ENCODE measurements at regions of chr1 and their contacts with region 1.

Region 1: DNA sequence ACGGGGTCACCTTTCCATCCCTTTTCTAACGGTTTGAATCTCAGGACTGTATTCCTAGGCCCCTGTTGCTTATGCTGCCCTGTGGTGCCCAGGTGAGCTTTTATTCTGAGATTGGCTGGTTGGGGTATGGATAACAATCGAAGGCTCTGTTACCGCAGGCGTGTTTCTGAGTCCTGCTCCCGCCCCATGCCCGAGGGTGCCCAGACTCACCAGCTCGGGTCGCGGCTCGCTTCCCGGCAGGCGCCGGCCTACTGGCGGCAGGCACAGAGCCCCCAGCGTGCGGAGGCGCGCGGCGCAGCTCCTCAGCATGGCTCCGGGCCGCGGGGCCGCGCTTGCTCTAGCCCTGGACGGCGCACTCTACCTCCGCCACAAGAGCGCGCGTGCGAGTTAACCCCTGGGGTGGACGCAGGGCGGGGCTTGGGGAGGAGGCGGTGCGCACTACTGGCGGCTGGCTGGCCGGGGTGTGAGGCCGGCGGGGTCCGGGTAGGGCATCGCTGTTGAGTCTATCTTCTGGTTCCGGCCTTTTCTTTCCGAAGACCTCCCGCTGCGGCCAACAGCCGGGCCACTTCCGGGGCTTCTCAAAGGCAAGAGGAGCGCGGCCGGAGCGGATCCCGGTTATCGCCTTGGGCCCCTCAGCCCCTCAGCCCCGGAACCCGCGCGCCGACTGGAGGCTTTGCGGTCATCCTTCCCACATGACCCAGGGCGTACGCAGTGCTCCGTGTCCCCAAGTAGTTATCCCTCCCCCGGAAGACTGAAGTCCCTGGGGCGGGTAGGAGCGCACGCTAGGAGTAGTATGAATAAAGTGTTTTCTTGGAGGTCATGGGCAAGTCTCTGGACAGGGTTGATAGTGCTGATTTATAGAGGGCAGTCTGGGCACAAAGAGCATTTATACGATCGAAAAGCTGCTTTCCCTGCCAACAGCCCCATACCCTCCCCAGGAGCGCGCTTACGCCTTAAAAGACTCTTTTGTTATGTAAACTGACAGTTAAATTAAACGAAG is at the start of gene THEM4:
- DNase-seq: peak; percentile 73 to 92 (median 83)
- ATAC-seq: peak; percentile 76 to 83
- H3K4me3 Mint-ChIP-seq: peak within 1 kb of the TSS; percentile 83 to 91 (median 86)
- H3K27ac Mint-ChIP-seq: peak within 1 kb of the TSS; percentile 87 to 97 (median 93)
- H3K4me1 Mint-ChIP-seq: peaks cover 18 to 43% (median 42%) of the 10 kb centered on the region in 4 donors
- H3K27me3 Mint-ChIP-seq: no peaks in the 10 kb centered on the region
- polyA plus RNA-seq, gene THEM4: 82.2 to 116 (median 103) TPM

Region 2: DNA sequence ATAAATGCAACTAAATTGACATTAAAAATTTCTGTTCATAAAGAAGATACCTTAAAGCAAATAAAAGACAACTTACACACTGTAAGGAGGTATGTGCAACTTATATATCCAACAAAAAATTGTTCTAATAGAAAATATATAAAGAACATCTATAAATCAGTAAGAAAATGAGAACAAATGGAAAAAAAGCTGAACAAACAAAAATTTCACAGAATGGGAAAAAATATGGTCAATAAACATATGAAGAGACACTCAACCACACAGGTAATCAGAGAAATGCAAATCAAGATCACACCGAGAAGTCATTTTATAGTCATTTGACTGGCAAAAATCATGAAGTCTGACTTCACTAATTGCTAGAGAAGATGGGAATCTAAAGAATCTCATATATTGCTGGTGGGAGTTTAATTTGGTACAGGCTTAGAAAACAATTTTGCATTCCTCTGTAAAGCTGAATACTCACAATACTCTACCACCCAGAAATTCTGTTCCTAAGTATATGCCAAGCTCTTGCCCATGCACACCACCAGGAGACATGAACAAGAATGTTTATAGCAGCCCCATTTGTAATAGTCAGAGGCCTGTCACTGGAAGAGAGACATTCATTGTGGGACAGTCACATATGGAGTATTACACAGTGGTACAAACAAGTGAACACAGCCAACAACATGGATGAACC is 33.9 kb before region 1 on chr1:
- POLR2A ChIA-PET with region 1: no interaction called
- DNase-seq: no peak
- ATAC-seq: no peak
- H3K4me3 Mint-ChIP-seq: no peak overlapping the region
- H3K27ac Mint-ChIP-seq: peak overlapping the region in 5 of 10 donors; percentile 6 to 65 (median 27)
- H3K4me1 Mint-ChIP-seq: peaks cover 12 to 19% (median 13%) of the 10 kb centered on the region in 4 donors
- H3K27me3 Mint-ChIP-seq: no peaks in the 10 kb centered on the region

Region 3: GRCh38 chr1:151888972-151889570 is 20.4 kb before region 1 on chr1:
- POLR2A ChIA-PET with region 1: interaction called, 189 read pairs
- DNase-seq: peak in 3 of 10 donors; percentile 32 to 48 (median 41)
- ATAC-seq: peak; percentile 52 to 56
- H3K4me3 Mint-ChIP-seq: no peak overlapping the region
- H3K27ac Mint-ChIP-seq: peak overlapping the region in 6 of 10 donors; percentile 8 to 78 (median 44)
- H3K4me1 Mint-ChIP-seq: peaks cover 16 to 34% (median 31%) of the 10 kb centered on the region in 4 donors
- H3K27me3 Mint-ChIP-seq: no peaks in the 10 kb centered on the region

Region 4: DNA sequence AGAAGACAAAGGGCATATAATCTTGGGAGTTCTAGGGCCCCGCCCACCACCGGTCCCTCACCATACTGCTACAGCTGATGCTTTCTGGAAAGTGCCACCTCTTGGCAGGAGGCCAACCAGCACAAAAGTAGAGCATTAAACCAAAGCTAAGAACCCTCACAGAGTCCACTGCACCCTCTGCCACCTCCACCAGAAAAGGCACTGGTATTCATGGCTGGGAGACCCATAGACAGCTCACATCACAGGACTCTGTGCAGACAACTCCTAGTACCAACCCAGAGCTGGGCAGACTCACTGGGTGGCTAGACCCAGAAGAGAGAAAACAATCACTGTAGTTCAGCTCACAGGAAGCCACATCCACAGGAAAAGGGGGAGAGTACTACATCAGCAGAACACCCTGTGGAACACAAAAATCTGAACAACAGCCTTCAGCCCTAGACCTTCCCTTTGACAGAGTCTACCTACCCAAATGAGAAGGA is 10.9 kb before region 1 on chr1:
- POLR2A ChIA-PET with region 1: interaction called, 189 read pairs
- DNase-seq: peak; percentile 10 to 84 (median 64)
- ATAC-seq: peak; percentile 88 to 94
- H3K4me3 Mint-ChIP-seq: peak overlapping the region; percentile 71 to 87 (median 80)
- H3K27ac Mint-ChIP-seq: peak overlapping the region; percentile 93 to 98 (median 96)
- H3K4me1 Mint-ChIP-seq: peaks cover 44 to 73% (median 67%) of the 10 kb centered on the region in 4 donors
- H3K27me3 Mint-ChIP-seq: no peaks in the 10 kb centered on the region

Region 5: GRCh38 chr1:151920149-151920548 is 10.7 kb after region 1 on chr1:
- POLR2A ChIA-PET with region 1: interaction called, 13 read pairs
- DNase-seq: no peak
- ATAC-seq: no peak
- H3K4me3 Mint-ChIP-seq: no peak overlapping the region
- H3K27ac Mint-ChIP-seq: no peak overlapping the region
- H3K4me1 Mint-ChIP-seq: peaks cover 4 to 26% (median 9%) of the 10 kb centered on the region in 4 donors
- H3K27me3 Mint-ChIP-seq: no peaks in the 10 kb centered on the region